ENCODE measurements at regions of chr22 and their contacts with region 1.

Region 1: GRCh38 chr22:43036282-43036829 is 21.4 kb upstream of the PACSIN2 start:
- DNase-seq: no peak
- H3K4me3 Mint-ChIP-seq: no peak overlapping the region
- H3K27ac Mint-ChIP-seq: no peak overlapping the region
- H3K4me1 Mint-ChIP-seq: peaks cover 4% of the 10 kb centered on the region
- H3K27me3 Mint-ChIP-seq: no peaks in the 10 kb centered on the region

Region 2: GRCh38 chr22:42820066-42820763 is 216.1 kb before region 1 on chr22:
- CTCF ChIA-PET with region 1: interaction called, 10 read pairs
- intact Hi-C with region 1: no loop called
- DNase-seq: no peak
- H3K4me3 Mint-ChIP-seq: no peak overlapping the region
- H3K27ac Mint-ChIP-seq: no peak overlapping the region
- H3K4me1 Mint-ChIP-seq: no peaks in the 10 kb centered on the region
- H3K27me3 Mint-ChIP-seq: no peaks in the 10 kb centered on the region

Region 3: DNA sequence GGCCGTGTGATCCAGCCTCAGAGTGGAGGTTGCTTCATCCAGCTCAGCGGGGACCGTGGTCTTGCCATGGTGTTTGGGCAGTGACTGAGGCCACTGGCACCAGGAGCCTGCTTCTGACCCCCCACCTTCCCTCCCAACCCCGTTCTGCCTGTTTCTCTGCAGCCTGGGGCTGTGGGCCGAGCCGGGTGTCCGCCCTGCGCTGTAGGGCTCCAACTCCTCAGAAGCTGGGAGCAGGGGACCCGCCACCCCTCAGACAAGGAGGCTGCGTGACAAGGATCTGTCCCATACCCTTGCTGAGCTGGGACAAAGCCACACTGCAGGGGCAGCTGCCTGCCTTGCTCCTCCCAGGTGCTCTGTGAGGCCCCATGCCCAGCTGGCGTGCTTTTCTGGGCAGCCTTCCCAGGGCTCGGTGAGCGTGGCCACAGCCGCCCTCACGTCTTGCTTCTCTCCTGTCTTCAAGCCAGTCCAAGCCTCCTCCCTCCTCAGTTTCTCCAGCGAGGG is 167.6 kb before region 1 on chr22:
- CTCF ChIA-PET with region 1: interaction called, 28 read pairs
- intact Hi-C with region 1: loop called (anchors 1 kb)
- DNase-seq: no peak
- H3K4me3 Mint-ChIP-seq: no peak overlapping the region
- H3K27ac Mint-ChIP-seq: no peak overlapping the region
- H3K4me1 Mint-ChIP-seq: peaks cover 7% of the 10 kb centered on the region
- H3K27me3 Mint-ChIP-seq: no peaks in the 10 kb centered on the region

Region 4: DNA sequence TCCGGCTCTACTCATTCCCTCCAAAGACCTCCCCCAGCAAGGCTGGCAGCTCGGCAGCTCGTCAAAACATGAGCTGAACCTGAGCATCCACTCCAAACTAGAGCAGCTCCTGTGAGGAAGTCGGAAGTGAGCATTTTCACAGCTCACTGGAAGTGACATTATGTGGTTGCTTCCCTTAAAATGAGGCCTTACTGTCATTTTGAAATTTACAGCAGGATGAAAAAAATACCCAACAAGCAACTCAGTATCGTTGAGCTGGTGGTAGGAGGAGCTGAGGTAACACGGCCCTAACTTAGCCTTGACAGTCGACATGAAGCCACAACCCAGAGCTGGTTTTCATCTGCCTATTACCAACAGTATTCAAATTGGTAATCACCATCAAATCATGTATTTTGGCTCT is 141.3 kb before region 1 on chr22:
- CTCF ChIA-PET with region 1: interaction called, 13 read pairs
- intact Hi-C with region 1: no loop called
- DNase-seq: peak; percentile 57
- H3K4me3 Mint-ChIP-seq: peak overlapping the region; percentile 35
- H3K27ac Mint-ChIP-seq: peak overlapping the region; percentile 74
- H3K4me1 Mint-ChIP-seq: peaks cover 38% of the 10 kb centered on the region
- H3K27me3 Mint-ChIP-seq: no peaks in the 10 kb centered on the region

Region 5: GRCh38 chr22:42994881-42995562 is 41.3 kb before region 1 on chr22:
- CTCF ChIA-PET with region 1: interaction called, 7 read pairs
- intact Hi-C with region 1: loop called (anchors 5 kb)
- DNase-seq: no peak
- H3K4me3 Mint-ChIP-seq: no peak overlapping the region
- H3K27ac Mint-ChIP-seq: no peak overlapping the region
- H3K4me1 Mint-ChIP-seq: peaks cover 49% of the 10 kb centered on the region
- H3K27me3 Mint-ChIP-seq: no peaks in the 10 kb centered on the region

Measured in activated naive CD4-positive, alpha-beta T cell treated with anti-CD3 and anti-CD28 coated beads for 36 hours (primary cell).